Endothelial cell of umbilical vein (primary cell): ENCODE measurements at regions of chr5 and their contacts with region 1.

Region 1: DNA sequence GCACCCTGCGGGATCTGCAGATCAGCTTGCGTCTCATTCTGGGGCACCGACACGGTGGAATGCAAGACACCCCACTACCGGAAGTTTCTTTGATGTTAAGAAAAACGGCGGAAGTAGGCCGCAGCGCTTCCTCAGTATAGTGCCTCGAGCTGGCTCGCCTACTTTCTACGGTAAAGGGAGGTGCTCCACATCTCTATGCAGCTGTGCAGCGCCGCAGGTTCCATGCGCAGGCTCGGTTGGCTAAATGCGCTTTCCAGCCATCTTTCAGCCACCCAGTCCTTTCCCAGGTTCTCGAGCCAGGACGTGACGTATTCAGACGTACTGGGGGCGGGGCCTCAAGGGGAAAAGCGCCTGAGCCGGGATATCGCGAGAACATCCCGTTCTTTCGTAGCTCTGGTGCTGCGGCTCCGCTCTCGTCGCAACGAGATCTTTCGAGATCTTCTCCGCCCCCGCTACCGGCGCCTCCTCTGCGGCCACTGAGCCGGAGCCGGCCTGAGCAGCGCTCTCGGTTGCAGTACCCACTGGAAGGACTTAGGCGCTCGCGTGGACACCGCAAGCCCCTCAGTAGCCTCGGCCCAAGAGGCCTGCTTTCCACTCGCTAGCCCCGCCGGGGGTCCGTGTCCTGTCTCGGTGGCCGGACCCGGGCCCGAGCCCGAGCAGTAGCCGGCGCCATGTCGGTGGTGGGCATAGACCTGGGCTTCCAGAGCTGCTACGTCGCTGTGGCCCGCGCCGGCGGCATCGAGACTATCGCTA is at the start of gene HSPA4:
- DNase-seq: peak; percentile 99
- H3K4me3 ChIP-seq: peak within 1 kb of the TSS; percentile 61 to 90 (median 61)
- H3K27ac ChIP-seq: peak within 1 kb of the TSS; percentile 86
- H3K4me1 ChIP-seq: peaks cover 37% of the 10 kb centered on the region
- H3K27me3 ChIP-seq: no peaks in the 10 kb centered on the region
- CTCF ChIP-seq: no peak
- POLR2A ChIP-seq: peak; percentile 98
- total RNA-seq, gene HSPA4: 157 and 161 TPM in 2 replicates

Region 2: DNA sequence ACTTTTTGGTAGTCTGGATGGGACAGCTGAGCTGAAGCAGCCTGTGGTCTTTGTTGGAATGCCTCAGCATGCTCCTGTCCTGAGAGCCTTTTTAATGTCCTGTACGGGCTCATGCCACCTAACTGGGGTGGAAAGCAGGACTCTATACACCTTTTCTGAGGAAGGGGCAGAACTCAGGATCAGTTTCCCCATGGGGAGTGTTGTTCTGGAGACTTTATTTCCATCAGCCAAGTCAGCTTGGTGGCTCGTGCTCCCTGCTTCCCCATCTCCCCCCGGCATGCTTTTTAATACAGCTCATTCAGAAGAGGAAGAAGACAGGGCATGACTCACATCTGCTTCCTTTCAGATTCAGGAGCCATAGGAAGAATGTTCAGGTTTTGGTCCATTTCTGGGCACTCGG is 269.7 kb before region 1 on chr5:
- CTCF ChIA-PET with region 1: no interaction called
- POLR2A ChIA-PET with region 1: no interaction called
- dilution Hi-C with region 1: no loop called
- intact Hi-C with region 1: no loop called
- DNase-seq: peak; percentile 78
- H3K4me3 ChIP-seq: no peak overlapping the region
- H3K27ac ChIP-seq: peak overlapping the region; percentile 72
- H3K4me1 ChIP-seq: peaks cover 21% of the 10 kb centered on the region
- H3K27me3 ChIP-seq: no peaks in the 10 kb centered on the region
- CTCF ChIP-seq: no peak
- POLR2A ChIP-seq: peak; percentile 71

Region 3: GRCh38 chr5:132829742-132830435 is 221.9 kb before region 1 on chr5:
- CTCF ChIA-PET with region 1: interaction called, 3 read pairs
- POLR2A ChIA-PET with region 1: no interaction called
- dilution Hi-C with region 1: no loop called
- intact Hi-C with region 1: loop called (anchors 2 kb)
- DNase-seq: peak; percentile 75
- H3K4me3 ChIP-seq: peak overlapping the region; percentile 41 to 59 (median 49)
- H3K27ac ChIP-seq: peak overlapping the region; percentile 32
- H3K4me1 ChIP-seq: peaks cover 12% of the 10 kb centered on the region
- H3K27me3 ChIP-seq: no peaks in the 10 kb centered on the region
- CTCF ChIP-seq: peak; percentile 92 to 99
- POLR2A ChIP-seq: peak; percentile 28

Region 4: DNA sequence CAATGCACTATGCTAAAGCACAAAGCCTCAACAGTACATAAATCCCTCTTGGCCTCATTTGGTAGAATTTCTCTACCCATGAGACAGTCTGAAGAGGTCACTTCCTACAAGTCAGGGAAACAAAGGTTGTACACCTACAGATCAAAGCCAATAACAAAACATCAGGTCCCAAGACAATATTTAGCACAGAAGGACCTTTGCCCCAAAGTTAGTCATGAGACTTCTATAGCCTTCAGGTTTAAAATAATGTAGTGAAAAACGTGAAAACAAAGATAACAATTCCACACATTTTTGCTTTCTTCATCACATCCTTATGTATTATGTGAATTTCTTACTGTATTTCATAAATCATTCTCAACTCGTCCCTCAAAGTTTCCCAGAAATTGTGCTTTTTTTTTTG is 104.1 kb before region 1 on chr5:
- CTCF ChIA-PET with region 1: no interaction called
- POLR2A ChIA-PET with region 1: no interaction called
- dilution Hi-C with region 1: no loop called
- intact Hi-C with region 1: loop called (anchors 5 kb)
- DNase-seq: peak; percentile 91
- H3K4me3 ChIP-seq: no peak overlapping the region
- H3K27ac ChIP-seq: peak overlapping the region; percentile 90
- H3K4me1 ChIP-seq: peaks cover 29% of the 10 kb centered on the region
- H3K27me3 ChIP-seq: no peaks in the 10 kb centered on the region
- CTCF ChIP-seq: no peak
- POLR2A ChIP-seq: no peak

Region 5: DNA sequence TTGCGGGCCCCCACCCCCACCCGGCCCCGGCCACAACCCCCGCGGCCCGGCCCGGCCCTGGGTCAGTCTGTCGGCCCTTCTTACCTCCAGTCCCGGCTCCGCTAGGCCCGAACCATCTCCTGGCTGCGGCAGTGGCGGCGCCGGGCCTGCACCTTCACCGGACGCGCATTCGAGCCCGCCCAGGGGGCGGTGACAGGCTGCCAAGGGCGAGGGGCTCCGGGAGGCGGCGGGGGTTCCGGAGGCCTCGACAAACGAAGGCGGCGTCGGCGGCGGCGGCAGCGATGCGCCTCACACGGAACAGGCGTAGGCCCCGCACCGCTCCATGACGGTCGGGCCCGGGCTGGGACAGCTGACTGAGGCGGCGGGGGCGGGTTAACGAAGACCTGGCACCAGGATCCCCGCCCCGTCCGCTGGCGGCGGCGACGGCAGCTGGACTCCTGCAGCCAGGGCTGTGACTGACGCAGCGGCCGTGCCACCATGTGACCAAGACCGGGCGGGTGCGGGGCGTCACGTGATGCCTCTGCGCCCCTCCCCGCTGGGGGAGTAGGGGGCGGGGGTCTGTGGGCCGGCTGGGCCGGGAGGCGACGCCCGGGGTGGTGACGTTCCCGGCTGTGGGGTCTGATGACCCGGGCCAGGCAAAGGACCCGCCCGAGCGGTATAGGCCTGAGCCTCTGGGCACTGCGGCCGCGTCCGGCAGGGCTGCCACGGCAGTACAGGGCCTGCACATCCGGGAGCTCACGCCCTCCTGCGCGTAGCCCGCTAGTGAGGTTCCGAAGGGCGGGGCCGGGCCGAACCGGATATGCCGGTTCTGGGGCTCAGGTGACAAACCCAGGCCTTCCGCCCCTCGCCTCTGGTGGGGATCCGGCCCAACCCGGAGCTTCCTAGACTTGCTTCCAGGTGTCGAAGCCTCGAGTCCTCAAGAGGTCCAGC is 88.3 kb before region 1 on chr5 and contains the start of gene AFF4:
- CTCF ChIA-PET with region 1: no interaction called
- POLR2A ChIA-PET with region 1: interaction called, 9 read pairs
- dilution Hi-C with region 1: no loop called
- intact Hi-C with region 1: loop called (anchors 1 kb)
- DNase-seq: peak; percentile 97
- H3K4me3 ChIP-seq: peak within 1 kb of the TSS; percentile 83 to 98 (median 84)
- H3K27ac ChIP-seq: peak within 1 kb of the TSS; percentile 81
- H3K4me1 ChIP-seq: peaks cover 15% of the 10 kb centered on the region
- H3K27me3 ChIP-seq: no peaks in the 10 kb centered on the region
- CTCF ChIP-seq: no peak
- POLR2A ChIP-seq: peak; percentile 90
- total RNA-seq, gene AFF4: 85.5 and 88.3 TPM in 2 replicates

Region 6: DNA sequence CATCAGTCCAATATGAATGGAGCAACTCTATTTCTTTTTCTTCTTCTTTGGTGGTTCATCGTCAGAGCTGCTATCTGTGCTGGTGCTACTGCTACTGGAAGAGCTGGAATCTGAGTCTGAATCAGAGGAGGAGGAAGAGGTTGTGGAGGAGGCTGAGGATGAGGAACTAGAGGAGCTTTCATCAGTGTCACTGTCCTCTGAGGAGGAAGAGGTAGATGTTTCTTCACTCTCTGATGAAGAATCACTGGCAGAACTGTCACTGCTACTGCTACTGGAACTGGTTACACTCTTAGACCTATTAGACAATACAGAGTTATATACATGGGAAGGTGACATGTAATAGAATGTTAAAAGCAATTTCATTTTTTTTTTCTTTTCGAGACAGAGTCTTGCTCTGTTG is 53.2 kb before region 1 on chr5:
- CTCF ChIA-PET with region 1: no interaction called
- POLR2A ChIA-PET with region 1: no interaction called
- dilution Hi-C with region 1: no loop called
- intact Hi-C with region 1: no loop called
- DNase-seq: no peak
- H3K4me3 ChIP-seq: no peak overlapping the region
- H3K27ac ChIP-seq: no peak overlapping the region
- H3K4me1 ChIP-seq: no peaks in the 10 kb centered on the region
- H3K27me3 ChIP-seq: no peaks in the 10 kb centered on the region
- CTCF ChIP-seq: no peak
- POLR2A ChIP-seq: no peak

Region 7: GRCh38 chr5:133025804-133026663 is 25.7 kb before region 1 on chr5 and contains the start of gene ZCCHC10:
- CTCF ChIA-PET with region 1: no interaction called
- POLR2A ChIA-PET with region 1: interaction called, 8 read pairs
- dilution Hi-C with region 1: no loop called
- intact Hi-C with region 1: loop called (anchors 1 kb)
- DNase-seq: peak; percentile 96
- H3K4me3 ChIP-seq: peak within 1 kb of the TSS; percentile 55 to 86 (median 84)
- H3K27ac ChIP-seq: peak within 1 kb of the TSS; percentile 54
- H3K4me1 ChIP-seq: peaks cover 5% of the 10 kb centered on the region
- H3K27me3 ChIP-seq: no peaks in the 10 kb centered on the region
- CTCF ChIP-seq: no peak
- POLR2A ChIP-seq: peak; percentile 96
- total RNA-seq, gene ZCCHC10: 25.9 and 30.5 TPM in 2 replicates

Region 8: DNA sequence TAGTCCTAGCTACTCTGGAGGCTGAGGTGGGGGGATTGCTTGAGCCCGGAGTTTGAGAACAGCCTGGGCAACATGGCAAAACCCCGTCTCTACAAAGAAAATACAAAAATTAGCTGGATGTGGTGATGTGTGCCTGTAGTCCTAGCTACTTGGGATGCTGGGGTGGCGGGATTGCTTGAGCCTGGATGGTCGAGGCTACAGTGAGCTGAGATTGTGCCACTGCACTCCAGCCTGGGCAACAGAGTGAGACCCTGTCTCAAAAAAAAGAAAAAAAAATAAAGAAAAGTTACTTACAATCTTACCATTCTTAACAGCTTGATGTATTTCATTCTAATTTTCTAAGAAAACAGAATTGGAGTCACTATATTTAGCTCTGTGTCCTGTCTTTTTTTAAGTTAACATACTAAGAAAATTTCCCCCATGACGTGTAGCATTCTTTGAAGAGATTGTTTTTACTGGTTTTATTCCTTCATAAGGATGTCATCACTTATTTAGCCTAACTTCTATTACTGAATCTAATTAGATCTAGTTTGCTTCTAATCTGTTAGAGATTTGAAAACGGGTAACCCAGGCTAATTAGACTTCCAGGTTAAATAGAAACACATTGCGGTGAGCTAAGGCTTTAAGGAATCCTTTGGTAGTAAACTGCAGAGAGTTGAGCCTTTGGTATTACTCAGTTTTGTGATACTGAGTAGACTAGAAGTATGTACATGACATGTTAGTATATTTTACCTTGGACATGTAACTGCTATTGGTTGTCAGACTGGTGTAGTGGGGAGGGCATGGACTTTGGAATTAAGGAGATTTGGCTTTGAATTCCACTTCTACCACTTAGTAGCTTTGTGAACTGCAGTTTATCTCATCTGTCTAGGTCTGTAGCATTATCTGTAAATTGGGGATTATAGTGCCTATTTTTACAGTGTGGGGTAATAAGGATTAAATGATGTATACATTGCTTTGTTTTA is 24.1 kb after region 1 on chr5:
- CTCF ChIA-PET with region 1: no interaction called
- POLR2A ChIA-PET with region 1: no interaction called
- dilution Hi-C with region 1: no loop called
- intact Hi-C with region 1: no loop called
- DNase-seq: no peak
- H3K4me3 ChIP-seq: no peak overlapping the region
- H3K27ac ChIP-seq: no peak overlapping the region
- H3K4me1 ChIP-seq: no peaks in the 10 kb centered on the region
- H3K27me3 ChIP-seq: no peaks in the 10 kb centered on the region
- CTCF ChIP-seq: no peak
- POLR2A ChIP-seq: no peak

Region 9: GRCh38 chr5:133240425-133241091 is 188.8 kb after region 1 on chr5:
- CTCF ChIA-PET with region 1: no interaction called
- POLR2A ChIA-PET with region 1: no interaction called
- dilution Hi-C with region 1: no loop called
- intact Hi-C with region 1: loop called (anchors 5 kb)
- DNase-seq: peak; percentile 95
- H3K4me3 ChIP-seq: no peak overlapping the region
- H3K27ac ChIP-seq: peak overlapping the region; percentile 77
- H3K4me1 ChIP-seq: peaks cover 27% of the 10 kb centered on the region
- H3K27me3 ChIP-seq: no peaks in the 10 kb centered on the region
- CTCF ChIP-seq: no peak
- POLR2A ChIP-seq: peak; percentile 49

Region 10: GRCh38 chr5:134240421-134240962 is 1188.7 kb after region 1 on chr5:
- CTCF ChIA-PET with region 1: no interaction called
- POLR2A ChIA-PET with region 1: no interaction called
- dilution Hi-C with region 1: no loop called
- intact Hi-C with region 1: no loop called
- DNase-seq: no peak
- H3K4me3 ChIP-seq: no peak overlapping the region
- H3K27ac ChIP-seq: no peak overlapping the region
- H3K4me1 ChIP-seq: no peaks in the 10 kb centered on the region
- H3K27me3 ChIP-seq: peaks cover 5 to 12% of the 10 kb centered on the region in 2 experiments
- CTCF ChIP-seq: no peak
- POLR2A ChIP-seq: no peak